OCI-LY7 (cell line): ENCODE measurements at regions of chr9 and their contacts with region 1.

Region 1: DNA sequence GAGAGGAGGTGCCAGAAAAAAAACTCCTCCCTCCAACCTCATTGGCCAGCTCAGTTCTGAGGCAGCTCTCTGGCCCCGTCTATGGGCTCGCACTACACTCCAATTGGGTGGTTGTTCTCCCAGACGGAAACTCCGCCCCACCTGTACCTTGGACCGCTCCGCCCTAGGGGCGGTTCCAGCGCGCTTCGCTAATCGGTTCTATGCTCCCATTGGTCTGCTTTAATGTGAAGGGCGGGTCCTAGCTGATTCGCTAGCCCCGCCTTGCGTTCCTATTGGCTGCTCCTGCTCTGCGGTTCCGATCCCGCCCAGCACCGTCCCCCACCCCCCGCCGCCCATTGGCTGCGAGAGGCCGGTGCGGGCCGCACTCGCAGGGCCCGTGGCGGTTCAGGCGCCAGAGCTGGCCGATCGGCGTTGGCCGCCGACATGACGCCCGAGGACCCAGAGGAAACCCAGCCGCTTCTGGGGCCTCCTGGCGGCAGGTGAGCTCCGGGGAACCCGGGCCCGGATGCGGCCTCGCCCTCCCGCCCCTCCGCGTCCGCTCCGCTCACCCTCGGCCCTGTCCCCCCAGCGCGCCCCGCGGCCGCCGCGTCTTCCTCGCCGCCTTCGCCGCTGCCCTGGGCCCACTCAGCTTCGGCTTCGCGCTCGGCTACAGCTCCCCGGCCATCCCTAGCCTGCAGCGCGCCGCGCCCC is at the start of gene SLC2A8:
- DNase-seq: peak; percentile 100
- H3K4me3 ChIP-seq: peak within 1 kb of the TSS; percentile 79
- H3K27ac ChIP-seq: no peak within 1 kb of the TSS
- H3K4me1 ChIP-seq: peaks cover 12% of the 10 kb centered on the region
- CTCF ChIP-seq: no peak
- total RNA-seq, gene SLC2A8: 5.6 and 11.9 TPM in 2 replicates

Region 2: DNA sequence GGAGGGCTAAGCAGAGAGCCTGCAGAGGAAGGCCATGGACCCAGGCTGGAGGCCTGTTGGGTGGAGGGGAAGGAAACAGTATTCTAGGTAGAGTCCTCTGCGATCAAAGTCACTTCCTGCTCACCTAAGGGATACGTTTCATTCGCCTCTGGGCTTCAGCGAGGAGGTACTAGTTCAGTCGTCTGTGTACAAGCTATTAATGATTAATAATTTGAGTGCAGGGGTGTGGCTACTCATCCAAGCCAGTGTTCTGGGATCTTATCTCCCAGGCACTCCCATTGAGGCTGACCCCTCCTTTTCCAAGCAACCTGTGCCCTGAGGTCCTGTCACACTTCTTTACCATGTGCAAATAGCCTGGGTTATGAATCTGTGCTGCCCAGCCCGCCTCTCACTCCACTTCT is 457.1 kb before region 1 on chr9:
- CTCF ChIA-PET with region 1: no interaction called
- POLR2A ChIA-PET with region 1: no interaction called
- intact Hi-C with region 1: loop called (anchors 5 kb)
- DNase-seq: no peak
- H3K4me3 ChIP-seq: no peak overlapping the region
- H3K27ac ChIP-seq: no peak overlapping the region
- H3K4me1 ChIP-seq: no peaks in the 10 kb centered on the region
- CTCF ChIP-seq: no peak

Region 3: GRCh38 chr9:127214421-127215267 is 182.3 kb before region 1 on chr9:
- CTCF ChIA-PET with region 1: no interaction called
- POLR2A ChIA-PET with region 1: interaction called, 3 read pairs
- intact Hi-C with region 1: loop called (anchors 2 kb)
- DNase-seq: peak; percentile 79
- H3K4me3 ChIP-seq: no peak overlapping the region
- H3K27ac ChIP-seq: no peak overlapping the region
- H3K4me1 ChIP-seq: no peaks in the 10 kb centered on the region
- CTCF ChIP-seq: peak; percentile 96

Region 4: GRCh38 chr9:127224178-127224882 is 172.6 kb before region 1 on chr9:
- CTCF ChIA-PET with region 1: interaction called, 3 read pairs
- POLR2A ChIA-PET with region 1: interaction called, 3 read pairs
- intact Hi-C with region 1: loop called (anchors 2 kb)
- DNase-seq: peak; percentile 96
- H3K4me3 ChIP-seq: peak overlapping the region; percentile 75
- H3K27ac ChIP-seq: peak overlapping the region; percentile 57
- H3K4me1 ChIP-seq: peaks cover 46% of the 10 kb centered on the region
- CTCF ChIP-seq: no peak

Region 5: GRCh38 chr9:127253446-127253845 is 143.5 kb before region 1 on chr9:
- CTCF ChIA-PET with region 1: no interaction called
- POLR2A ChIA-PET with region 1: no interaction called
- intact Hi-C with region 1: no loop called
- DNase-seq: no peak
- H3K4me3 ChIP-seq: no peak overlapping the region
- H3K27ac ChIP-seq: no peak overlapping the region
- H3K4me1 ChIP-seq: no peaks in the 10 kb centered on the region
- CTCF ChIP-seq: no peak

Region 6: DNA sequence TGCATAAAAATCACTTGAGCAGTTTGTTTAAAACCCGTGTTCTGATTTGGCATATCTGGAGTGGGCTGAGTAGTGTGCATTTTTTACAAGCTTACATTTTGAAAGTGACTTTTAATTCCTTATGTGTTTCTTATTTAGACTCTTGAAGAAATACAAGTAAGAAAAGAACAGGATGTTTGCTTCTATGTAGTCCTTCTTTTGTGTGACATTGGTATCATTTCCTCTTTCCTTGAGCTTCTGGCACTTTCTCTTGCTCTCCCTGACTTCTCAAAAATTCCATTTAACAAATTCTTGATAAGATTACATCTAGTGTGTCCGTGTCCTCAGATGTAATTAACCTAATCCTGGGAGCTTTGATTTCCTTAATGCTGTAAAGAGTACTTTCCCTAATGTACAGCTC is 119.9 kb before region 1 on chr9:
- CTCF ChIA-PET with region 1: no interaction called
- POLR2A ChIA-PET with region 1: no interaction called
- intact Hi-C with region 1: loop called (anchors 10 kb)
- DNase-seq: peak; percentile 66
- H3K4me3 ChIP-seq: peak overlapping the region; percentile 31
- H3K27ac ChIP-seq: peak overlapping the region; percentile 56
- H3K4me1 ChIP-seq: peaks cover 59% of the 10 kb centered on the region
- CTCF ChIP-seq: no peak

Region 7: DNA sequence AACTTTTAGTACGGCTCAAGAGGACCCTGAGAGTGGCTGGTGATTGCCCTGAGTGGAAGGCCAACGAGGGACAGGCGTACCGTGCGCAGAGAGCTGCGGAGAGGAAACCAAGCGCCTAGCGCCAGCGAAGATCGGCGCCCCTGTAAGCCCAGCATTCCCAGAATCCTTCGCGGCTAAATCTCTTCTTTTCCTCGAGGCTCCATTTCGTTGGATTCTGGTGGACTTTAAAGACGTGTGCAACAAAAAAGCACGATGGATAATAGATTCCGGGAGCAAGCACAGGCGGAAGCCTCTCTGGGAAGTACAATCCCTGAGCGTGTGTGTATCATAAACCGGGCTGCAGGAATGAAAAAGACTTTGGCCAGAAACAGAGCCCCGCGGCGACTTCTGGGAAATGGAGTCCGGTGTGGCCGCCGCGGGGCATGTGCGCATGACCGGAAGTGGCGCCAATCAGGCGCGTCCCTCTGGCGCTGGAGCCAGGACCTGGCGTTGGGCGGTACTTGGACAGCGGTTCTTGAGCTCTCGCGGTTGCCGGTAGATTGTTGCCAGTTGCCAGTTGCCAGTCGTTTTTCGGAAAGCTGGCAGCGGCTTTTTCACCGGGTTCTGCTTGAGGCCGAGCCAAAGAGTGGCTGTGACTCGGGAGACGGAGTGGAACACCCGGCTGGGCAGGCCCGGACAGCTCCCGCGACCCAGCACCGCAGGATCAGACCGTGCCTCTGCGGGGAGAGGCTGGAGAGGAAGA is 27.2 kb after region 1 on chr9 and contains the start of gene ZNF79:
- CTCF ChIA-PET with region 1: no interaction called
- POLR2A ChIA-PET with region 1: interaction called, 3 read pairs
- intact Hi-C with region 1: loop called (anchors 1 kb)
- DNase-seq: peak; percentile 89
- H3K4me3 ChIP-seq: peak within 1 kb of the TSS; percentile 84
- H3K27ac ChIP-seq: peak within 1 kb of the TSS; percentile 41
- H3K4me1 ChIP-seq: peaks cover 22% of the 10 kb centered on the region
- CTCF ChIP-seq: 0 out of 2 replicates have a peak, but pooled peaks have one; percentile 3
- total RNA-seq, gene ZNF79: 14.1 and 14.9 TPM in 2 replicates